Spleen (tissue), 13 donors: ENCODE measurements at regions of chr2 and their contacts with region 1.

Region 1: DNA sequence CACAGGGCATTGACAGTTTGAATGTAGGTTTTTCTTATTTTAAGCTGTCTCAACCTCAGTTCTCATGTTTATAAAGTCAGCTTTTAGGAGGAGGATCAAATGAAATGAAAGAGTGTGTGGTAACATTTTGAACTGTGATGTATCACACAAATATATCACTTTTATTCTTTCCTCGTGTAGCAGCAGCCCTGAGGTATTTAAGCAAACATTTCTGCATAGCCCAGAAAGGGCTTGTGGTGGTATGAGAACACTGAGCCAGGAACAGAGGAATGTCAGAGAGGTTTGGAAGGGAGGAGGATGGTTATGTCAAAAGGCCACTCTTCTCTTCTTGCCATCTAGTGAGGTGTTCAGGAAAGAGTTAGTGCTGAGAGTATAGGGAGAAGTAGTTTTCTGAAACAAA is 150.2 kb downstream of the PARD3B start:
- DNase-seq: no peak
- H3K4me3 ChIP-seq: no peak overlapping the region
- H3K27ac ChIP-seq: no peak overlapping the region
- H3K4me1 ChIP-seq: peaks cover 0 to 8% (median 0%) of the 10 kb centered on the region in 6 donors
- H3K27me3 ChIP-seq: no peaks in the 10 kb centered on the region
- CTCF ChIP-seq: no peak
- POLR2A ChIP-seq: no peak

Region 2: GRCh38 chr2:204159526-204159925 is 536.0 kb before region 1 on chr2:
- intact Hi-C with region 1: no loop called
- DNase-seq: no peak
- H3K4me3 ChIP-seq: no peak overlapping the region
- H3K27ac ChIP-seq: no peak overlapping the region
- H3K4me1 ChIP-seq: no peaks in the 10 kb centered on the region
- H3K27me3 ChIP-seq: peaks cover 0 to 3% (median 0%) of the 10 kb centered on the region in 7 donors
- CTCF ChIP-seq: no peak
- POLR2A ChIP-seq: no peak

Region 3: DNA sequence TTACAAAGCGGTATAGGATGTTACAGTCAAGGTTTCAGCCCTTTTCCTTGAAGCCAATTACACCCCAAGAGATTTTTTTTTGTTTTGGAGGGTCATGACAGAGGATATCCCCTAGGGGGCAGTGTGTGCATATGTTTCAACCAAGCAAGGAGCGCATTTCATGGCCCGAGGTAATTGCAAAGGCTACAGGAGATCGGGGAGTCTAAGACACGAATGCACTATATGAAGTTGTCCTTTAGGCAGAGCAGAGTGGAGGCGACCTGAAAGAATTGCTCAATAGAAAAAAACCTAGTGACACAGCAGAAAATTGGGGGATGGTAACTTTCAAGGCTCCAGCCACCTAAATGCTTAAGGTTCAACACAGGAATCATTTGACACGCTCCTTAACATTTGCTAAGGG is 370.0 kb before region 1 on chr2:
- intact Hi-C with region 1: loop called (anchors 5 kb)
- DNase-seq: no peak
- H3K4me3 ChIP-seq: no peak overlapping the region
- H3K27ac ChIP-seq: no peak overlapping the region
- H3K4me1 ChIP-seq: peaks cover 0 to 15% (median 6%) of the 10 kb centered on the region in 6 donors
- H3K27me3 ChIP-seq: no peaks in the 10 kb centered on the region
- CTCF ChIP-seq: peak; percentile 52 to 94 (median 80)
- POLR2A ChIP-seq: no peak

Region 4: DNA sequence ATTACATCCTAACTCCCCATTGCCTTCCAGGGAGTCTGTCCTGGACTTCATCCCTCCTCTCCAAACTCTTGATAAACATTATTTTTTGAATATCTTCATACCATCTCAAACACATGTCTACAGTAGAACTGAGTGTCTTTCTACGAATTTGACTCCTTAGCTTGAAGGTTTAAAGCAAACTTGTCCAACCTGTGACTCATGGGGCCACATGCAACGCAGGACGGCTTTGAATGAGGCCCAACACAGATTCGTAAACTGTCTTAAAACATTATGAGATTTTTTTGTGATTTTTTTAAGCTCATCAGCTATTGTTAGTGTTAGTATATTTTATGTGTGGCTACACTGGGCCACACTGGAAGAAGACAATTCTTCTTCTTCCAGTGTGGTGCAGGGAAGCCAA is 52.2 kb before region 1 on chr2:
- intact Hi-C with region 1: no loop called
- DNase-seq: no peak
- H3K4me3 ChIP-seq: no peak overlapping the region
- H3K27ac ChIP-seq: no peak overlapping the region
- H3K4me1 ChIP-seq: no peaks in the 10 kb centered on the region
- H3K27me3 ChIP-seq: no peaks in the 10 kb centered on the region
- CTCF ChIP-seq: no peak
- POLR2A ChIP-seq: no peak